Activated naive CD8-positive, alpha-beta T cell treated with anti-CD3 and anti-CD28 coated beads, Interleukin-2, amount 10 ng/mL, durations not matched to agents 7 days and 5 days (primary cell): ENCODE measurements at regions of chr20 and their contacts with region 1.

Region 1: GRCh38 chr20:1286267-1287024 is 20.4 kb downstream of the SNPH start:
- DNase-seq: no peak
- ATAC-seq: peak; percentile 46
- H3K4me3 Mint-ChIP-seq: peak overlapping the region; percentile 74
- H3K27ac Mint-ChIP-seq: peak overlapping the region; percentile 85
- H3K4me1 Mint-ChIP-seq: peaks cover 25% of the 10 kb centered on the region
- H3K27me3 Mint-ChIP-seq: no peaks in the 10 kb centered on the region

Region 2: DNA sequence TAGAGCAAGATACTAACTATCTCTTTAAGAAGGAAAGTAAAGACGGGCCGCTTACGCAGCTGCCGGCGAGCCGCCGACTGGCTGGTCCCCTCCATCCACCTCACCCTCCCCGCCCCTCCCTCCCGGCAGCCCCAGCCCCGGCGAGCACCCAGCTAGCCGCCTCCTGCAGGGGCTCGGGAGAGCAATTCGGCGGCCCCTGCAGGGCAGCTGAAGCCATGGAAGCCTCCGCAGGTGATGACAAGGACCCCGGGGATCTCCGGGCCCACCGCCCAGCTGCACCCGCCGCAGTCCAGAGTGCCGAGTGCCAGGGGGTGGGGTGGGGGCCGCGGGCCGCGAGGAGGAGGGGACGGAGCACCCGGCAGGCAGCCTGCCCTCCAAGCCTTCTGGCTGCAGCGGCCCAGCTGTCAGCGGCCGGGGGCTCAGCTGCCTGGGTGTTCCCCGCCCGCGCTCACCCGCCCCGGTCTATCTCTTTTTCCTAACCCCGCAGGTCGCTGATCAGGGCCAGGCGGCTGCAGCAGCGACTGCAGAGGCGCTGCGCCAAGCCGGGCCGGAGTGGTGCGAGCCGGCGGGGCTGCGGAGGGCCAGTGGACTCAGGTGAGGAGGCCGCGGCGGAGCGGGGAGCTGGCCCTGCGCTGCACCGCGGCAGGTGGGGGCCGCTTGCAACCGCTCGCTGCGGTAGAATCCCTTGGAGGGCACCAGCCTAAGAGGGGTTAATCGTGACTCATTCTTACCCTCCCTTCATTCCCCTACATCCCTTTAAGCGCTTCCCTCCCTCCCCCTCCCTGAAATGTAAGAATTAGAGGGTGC is 20.1 kb before region 1 on chr20 and contains the start of gene SNPH:
- POLR2A ChIA-PET with region 1: interaction called, 10 read pairs
- DNase-seq: peak; percentile 73
- ATAC-seq: peak; percentile 91
- H3K4me3 Mint-ChIP-seq: peak within 1 kb of the TSS; percentile 84
- H3K27ac Mint-ChIP-seq: peak within 1 kb of the TSS; percentile 86
- H3K4me1 Mint-ChIP-seq: peaks cover 21% of the 10 kb centered on the region
- H3K27me3 Mint-ChIP-seq: peaks cover 7% of the 10 kb centered on the region
- total RNA-seq, gene SNPH: 8.8 to 9.7 TPM

Region 3: DNA sequence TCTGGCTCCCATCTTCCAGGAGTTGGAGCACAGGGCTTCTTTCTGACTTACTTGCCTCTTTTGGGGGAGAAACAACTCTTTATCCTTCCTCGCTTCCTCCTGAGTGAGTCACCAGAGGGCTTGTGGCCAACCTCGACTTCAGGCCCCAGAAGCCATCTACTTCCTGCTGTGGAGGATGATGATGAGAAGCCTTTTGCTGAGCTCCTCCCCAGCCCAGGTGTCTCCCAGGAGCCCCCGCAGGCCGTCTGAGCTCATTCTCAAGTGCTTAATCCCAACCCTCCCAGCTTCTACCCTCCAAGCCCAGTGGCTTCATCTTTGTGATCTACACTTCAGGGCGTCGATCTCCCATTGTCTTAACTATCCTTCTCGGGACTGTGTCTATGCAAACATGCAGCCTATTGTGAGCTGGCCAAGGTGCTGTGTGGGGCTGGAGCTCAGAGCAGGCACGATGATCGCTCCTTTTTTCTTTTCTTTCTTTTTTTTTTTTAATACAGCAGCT is 14.6 kb after region 1 on chr20:
- POLR2A ChIA-PET with region 1: interaction called, 12 read pairs
- DNase-seq: peak; percentile 75
- ATAC-seq: peak; percentile 93
- H3K4me3 Mint-ChIP-seq: peak overlapping the region; percentile 86
- H3K27ac Mint-ChIP-seq: peak overlapping the region; percentile 97
- H3K4me1 Mint-ChIP-seq: peaks cover 28% of the 10 kb centered on the region
- H3K27me3 Mint-ChIP-seq: no peaks in the 10 kb centered on the region

Region 4: DNA sequence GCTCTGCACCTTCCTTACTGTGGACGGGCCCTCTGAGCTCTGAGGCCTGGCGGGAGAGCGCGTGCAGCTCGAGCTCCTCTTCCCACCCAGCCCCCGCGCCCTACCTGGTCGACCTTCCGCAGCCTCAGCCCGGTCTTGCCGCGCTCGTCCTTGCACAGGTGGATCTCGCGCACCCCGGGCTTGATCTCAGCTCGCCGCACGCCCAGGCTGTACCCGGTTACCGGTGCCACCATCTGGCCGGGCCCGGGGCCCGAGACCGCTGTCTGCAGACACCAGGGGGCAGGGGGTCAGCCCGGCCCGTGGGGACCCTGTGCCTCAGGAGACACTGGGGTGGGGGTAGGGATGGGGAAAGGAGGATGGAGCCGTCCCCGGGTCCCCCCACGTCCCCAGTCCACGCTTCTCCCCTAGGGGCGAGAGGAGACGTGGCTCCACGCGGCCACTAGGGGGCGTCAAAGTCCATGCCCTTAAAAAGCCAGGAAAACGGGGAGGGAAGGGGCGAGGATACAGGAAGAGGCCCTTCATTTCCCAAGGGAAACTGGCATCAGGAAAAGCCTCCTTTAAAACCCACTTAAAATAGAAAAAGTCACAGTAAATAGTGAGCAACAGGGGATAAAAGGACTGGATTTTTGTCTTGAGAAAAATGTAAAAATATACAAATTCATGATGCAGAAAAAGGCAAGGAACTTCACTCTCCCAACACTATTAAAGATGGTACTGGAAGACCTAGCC is 27.0 kb after region 1 on chr20:
- POLR2A ChIA-PET with region 1: no interaction called
- DNase-seq: peak; percentile 71
- ATAC-seq: peak; percentile 69
- H3K4me3 Mint-ChIP-seq: no peak overlapping the region
- H3K27ac Mint-ChIP-seq: no peak overlapping the region
- H3K4me1 Mint-ChIP-seq: peaks cover 10% of the 10 kb centered on the region
- H3K27me3 Mint-ChIP-seq: no peaks in the 10 kb centered on the region

Region 5: GRCh38 chr20:1336699-1337367 is 50.4 kb after region 1 on chr20:
- POLR2A ChIA-PET with region 1: no interaction called
- DNase-seq: no peak
- ATAC-seq: peak; percentile 82
- H3K4me3 Mint-ChIP-seq: peak overlapping the region; percentile 60
- H3K27ac Mint-ChIP-seq: peak overlapping the region; percentile 90
- H3K4me1 Mint-ChIP-seq: peaks cover 19% of the 10 kb centered on the region
- H3K27me3 Mint-ChIP-seq: no peaks in the 10 kb centered on the region

Region 6: DNA sequence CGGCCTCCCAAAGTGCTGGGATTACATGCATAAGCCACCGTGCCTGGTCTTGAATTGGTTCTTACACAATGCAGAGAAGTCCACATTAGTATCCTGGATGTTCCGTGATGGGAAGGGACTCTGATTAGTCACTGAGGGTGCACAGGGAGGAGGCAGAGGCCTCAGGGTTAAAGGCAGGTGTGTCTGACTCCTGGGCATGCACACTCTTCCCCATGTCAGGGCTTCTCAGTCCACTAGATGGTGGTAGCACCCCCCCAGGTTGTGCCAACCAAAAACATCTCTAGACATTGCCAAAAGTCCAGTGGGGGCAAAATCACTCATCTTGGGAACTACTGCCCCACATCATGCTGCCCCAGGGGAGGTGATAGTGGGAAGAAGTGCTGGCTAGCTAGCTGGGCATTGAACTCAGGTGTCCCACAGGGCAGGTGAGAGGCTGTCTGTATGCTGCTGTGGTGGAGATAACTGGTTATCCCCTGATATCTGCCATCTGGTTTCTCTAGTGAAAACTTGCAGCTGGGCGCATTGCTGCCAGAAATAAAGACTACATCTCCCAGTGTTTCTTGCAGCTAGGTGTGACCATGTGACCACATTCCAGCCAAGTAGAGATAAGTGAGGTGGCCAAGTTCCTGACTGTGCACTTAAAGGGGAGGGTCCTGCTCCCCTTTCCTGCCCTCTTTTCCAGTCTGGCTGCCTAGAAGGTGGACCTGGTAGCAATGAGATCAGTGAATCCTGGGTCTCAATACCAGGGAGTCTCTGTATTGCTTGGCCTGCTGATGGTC is 188.6 kb after region 1 on chr20:
- POLR2A ChIA-PET with region 1: no interaction called
- DNase-seq: no peak
- ATAC-seq: no peak
- H3K4me3 Mint-ChIP-seq: no peak overlapping the region
- H3K27ac Mint-ChIP-seq: no peak overlapping the region
- H3K4me1 Mint-ChIP-seq: peaks cover 2% of the 10 kb centered on the region
- H3K27me3 Mint-ChIP-seq: peaks cover 3% of the 10 kb centered on the region